ENCODE measurements at regions of chr4 and their contacts with region 1.

Region 1: DNA sequence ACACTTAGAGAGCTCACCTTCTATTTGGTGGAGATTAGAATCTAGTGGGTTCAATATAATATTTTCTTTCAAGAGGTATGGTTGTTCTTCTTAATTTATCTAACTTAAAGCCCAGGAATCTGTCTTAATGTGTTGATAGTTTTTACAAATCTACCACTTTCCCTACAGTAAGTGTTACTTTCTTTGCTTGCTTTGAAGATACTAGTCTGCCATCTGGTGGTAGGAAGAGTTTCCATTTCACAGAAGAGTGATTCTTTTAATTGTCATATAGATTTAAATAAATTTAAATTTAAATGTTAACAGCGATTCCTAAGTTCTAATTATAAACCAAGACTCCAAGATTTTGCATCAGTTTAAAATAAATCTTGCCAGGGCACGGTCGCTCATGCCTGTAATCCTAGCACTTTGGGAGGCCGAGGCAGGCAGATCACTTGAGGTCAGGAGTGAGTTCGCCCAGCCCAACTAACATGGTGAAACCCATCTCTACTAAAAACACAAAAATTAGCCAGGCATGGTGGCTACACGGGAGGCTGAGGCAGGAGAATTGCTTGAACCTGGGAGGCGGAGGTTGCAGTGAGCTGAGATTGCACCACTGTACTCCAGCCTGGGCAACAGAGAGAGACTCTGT is 43.5 kb downstream of the NUDT9 start:
- DNase-seq: no peak
- H3K4me3 ChIP-seq: no peak overlapping the region
- H3K27ac ChIP-seq: no peak overlapping the region
- H3K4me1 ChIP-seq: peaks cover 0 to 5% (median 0%) of the 10 kb centered on the region in 3 donors
- H3K27me3 ChIP-seq: no peaks in the 10 kb centered on the region
- CTCF ChIP-seq: peak; percentile 39 to 83 (median 66)
- POLR2A ChIP-seq: no peak

Region 2: DNA sequence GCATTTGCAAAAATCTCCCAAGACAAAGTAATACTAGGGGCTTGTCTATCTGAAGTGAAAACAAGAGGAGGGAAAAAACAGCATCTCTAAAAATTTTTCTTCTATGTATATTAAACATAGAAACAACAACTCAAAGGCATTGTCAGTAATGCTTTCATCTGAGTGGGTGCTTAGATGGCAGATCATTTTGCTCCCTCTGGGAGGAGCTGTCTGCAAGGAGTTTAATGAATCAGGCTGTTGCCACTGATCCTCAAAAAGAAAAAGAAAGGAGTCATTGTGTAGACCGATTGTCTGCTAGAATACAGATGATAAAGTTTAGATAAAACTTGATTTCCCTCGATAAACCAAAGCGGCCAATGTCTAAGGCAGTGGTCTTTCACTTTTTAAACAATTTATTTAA is 195.7 kb before region 1 on chr4:
- intact Hi-C with region 1: loop called (anchors 10 kb)
- DNase-seq: no peak
- H3K4me3 ChIP-seq: no peak overlapping the region
- H3K27ac ChIP-seq: no peak overlapping the region
- H3K4me1 ChIP-seq: peaks cover 0 to 5% (median 0%) of the 10 kb centered on the region in 3 donors
- H3K27me3 ChIP-seq: no peaks in the 10 kb centered on the region
- CTCF ChIP-seq: peak in 5 of 6 experiments; percentile 28 to 70 (median 47)
- POLR2A ChIP-seq: no peak

Region 3: DNA sequence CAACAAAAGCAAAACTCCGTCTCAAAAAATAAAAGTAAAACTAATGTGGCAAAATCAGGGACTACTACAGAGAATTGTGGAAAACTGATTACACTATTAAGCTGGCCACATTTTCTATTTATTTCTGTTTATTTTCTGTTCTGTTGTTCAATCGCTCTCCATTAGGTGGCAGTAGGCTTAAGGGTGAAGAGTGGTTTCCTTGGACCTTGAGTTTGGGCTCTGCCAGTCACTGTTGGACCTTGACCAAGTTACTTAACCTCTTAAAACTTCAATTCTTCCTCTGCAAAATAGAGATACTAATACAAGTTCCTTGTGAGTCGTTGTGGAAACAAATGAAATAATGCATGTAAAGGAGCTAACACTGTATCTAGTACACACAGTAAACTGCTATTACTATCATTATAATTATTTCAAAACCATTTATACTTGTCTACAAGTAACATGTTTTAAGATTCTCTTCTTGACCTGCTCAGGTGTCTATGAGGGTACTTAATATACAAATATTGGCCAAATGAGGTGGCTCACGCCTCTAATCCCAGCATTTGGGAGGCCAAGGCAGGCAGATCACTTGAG is 90.0 kb before region 1 on chr4:
- intact Hi-C with region 1: loop called (anchors 5 kb)
- DNase-seq: no peak
- H3K4me3 ChIP-seq: no peak overlapping the region
- H3K27ac ChIP-seq: peak overlapping the region in 2 of 4 donors; percentile 45 to 48
- H3K4me1 ChIP-seq: peaks cover 0 to 23% (median 10%) of the 10 kb centered on the region in 3 donors
- H3K27me3 ChIP-seq: no peaks in the 10 kb centered on the region
- CTCF ChIP-seq: peak; percentile 24 to 77 (median 69)
- POLR2A ChIP-seq: no peak

Measured in esophagus squamous epithelium (tissue), 5 donors.